Testis (tissue), 5 donors: ENCODE measurements at regions of chr5 and their contacts with region 1.

Region 1: DNA sequence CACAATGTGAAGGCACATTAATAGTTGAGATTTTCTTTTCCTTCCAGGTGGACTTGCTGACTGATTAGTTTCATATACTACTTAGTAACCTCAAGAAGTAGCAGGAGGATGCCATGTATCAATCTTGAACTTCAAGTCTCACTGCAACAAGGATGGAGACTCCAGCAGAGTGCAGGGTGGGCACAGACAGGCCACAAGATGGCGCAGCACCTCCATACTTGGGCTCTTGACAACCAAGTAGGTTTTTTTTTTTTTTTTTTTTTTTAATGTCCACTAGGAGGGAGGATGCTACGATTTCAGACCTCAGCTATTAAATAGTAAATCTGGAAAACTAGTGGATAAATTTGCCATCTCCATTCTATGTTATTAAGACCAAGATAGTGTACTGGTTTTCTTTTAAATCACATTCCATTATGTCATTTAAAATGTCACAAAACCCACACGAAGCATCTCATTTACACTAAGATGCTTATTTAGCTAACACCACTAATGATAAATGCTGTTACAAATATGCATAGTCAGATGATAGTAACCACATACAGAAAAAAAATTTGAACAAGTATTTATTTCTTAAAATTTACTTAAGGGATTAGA is 58.6 kb downstream of the IL6ST start:
- DNase-seq: peak; percentile 92
- H3K4me3 ChIP-seq: no peak overlapping the region
- H3K27ac ChIP-seq: no peak overlapping the region
- H3K4me1 ChIP-seq: no peaks in the 10 kb centered on the region
- H3K27me3 ChIP-seq: no peaks in the 10 kb centered on the region
- CTCF ChIP-seq: peak; percentile 46 to 75 (median 73)
- POLR2A ChIP-seq: no peak

Region 2: DNA sequence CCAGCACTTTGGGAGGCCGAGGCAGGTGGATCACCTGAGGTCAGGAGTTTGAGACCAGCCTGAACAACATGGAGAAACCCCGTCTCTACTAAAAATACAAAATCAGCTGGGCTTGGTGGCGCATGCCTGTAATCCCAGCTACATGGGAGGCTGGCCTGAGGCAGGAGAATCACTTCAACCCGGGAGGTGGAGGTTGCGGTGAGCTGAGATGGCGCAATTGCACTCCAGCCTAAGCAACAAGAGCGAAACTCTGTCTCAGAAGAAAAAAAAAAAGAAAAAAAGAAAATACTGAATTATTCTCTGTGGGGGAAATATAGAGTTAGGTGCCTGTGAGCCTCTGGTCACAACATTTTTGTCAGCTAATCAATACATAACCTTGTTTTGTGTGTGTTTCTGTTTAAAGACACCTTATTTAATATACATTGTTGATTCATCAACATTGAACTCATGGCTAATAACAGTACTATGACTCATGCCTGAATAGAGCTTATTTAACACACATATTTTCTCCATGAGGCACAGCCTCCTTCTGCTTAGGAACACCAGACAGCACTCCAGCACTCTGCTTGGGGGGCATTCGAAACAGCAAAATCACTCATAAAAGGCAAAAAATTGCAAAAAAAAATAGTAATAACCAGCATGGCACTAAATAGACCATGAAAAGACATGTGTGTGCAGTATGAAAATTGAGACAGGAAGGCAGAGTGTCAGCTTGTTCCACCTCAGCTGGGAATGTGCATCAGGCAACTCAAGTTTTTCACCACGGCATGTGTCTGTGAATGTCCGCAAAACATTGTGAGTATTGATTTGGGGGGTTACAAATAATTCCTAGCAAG is 85.1 kb before region 1 on chr5 and contains the start of gene IL31RA:
- intact Hi-C with region 1: no loop called
- DNase-seq: no peak
- H3K4me3 ChIP-seq: no peak within 1 kb of the TSS
- H3K27ac ChIP-seq: no peak within 1 kb of the TSS
- H3K4me1 ChIP-seq: no peaks in the 10 kb centered on the region
- H3K27me3 ChIP-seq: no peaks in the 10 kb centered on the region
- CTCF ChIP-seq: no peak
- POLR2A ChIP-seq: no peak
- total RNA-seq, gene IL31RA: 2.7 to 3.1 TPM

Region 3: GRCh38 chr5:56200856-56201666 is 264.9 kb after region 1 on chr5:
- intact Hi-C with region 1: loop called (anchors 10 kb)
- DNase-seq: peak; percentile 76
- H3K4me3 ChIP-seq: no peak overlapping the region
- H3K27ac ChIP-seq: no peak overlapping the region
- H3K4me1 ChIP-seq: no peaks in the 10 kb centered on the region
- H3K27me3 ChIP-seq: no peaks in the 10 kb centered on the region
- CTCF ChIP-seq: peak; percentile 49 to 54 (median 52)
- POLR2A ChIP-seq: no peak